Activated CD4-positive, alpha-beta memory T cell treated with anti-CD3 and anti-CD28 coated beads, Interleukin-2, amount 10 ng/mL, durations not matched to agents 7 days and 5 days (primary cell): ENCODE measurements at regions of chr11 and their contacts with region 1.

Region 1: DNA sequence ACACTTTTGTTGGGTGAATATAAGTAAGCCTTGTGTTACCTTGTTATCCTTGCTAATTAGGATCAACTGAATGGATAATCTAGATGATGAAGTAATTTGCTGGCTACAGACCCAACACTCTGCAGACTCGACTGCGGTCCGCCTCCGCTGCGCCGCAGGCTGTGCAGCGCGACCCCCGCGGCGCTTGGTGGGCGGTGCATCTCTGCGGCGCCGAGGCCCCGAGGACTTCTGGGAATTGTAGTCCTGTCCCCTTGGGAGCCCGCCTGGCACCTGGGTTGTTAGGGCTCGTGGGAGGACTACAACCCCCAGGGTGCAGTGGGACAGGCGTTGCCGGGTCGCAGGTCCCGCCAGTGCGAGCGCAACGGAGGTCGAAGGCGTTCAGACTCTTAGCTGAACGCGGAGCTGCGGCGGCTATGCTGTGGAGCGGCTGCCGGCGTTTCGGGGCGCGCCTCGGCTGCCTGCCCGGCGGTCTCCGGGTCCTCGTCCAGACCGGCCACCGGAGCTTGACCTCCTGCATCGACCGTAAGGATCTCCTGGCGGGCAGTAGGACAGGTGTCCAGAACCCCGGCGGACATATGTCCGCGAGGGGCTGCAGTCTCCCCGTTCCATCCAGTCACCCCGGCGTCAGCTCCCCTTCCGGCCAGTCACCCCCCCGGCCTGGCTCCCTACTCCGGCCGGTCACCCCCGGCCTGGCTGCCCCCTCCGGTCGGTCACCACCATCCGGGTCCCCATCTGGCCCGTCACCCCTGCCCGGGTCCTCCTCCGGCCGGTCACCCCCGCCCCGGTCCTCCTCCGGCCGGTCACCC is at the starts of genes ACAD8 and THYN1:
- DNase-seq: peak; percentile 97
- H3K4me3 Mint-ChIP-seq: peak within 1 kb of the TSS; percentile 88
- H3K27ac Mint-ChIP-seq: peak within 1 kb of the TSS; percentile 64
- H3K4me1 Mint-ChIP-seq: peaks cover 44% of the 10 kb centered on the region
- H3K27me3 Mint-ChIP-seq: no peaks in the 10 kb centered on the region
- total RNA-seq, gene ACAD8: 21.8 to 23.3 TPM
- total RNA-seq, gene THYN1: 61.5 to 67.0 TPM

Region 2: GRCh38 chr11:134270250-134270714 is 16.9 kb after region 1 on chr11:
- CTCF ChIA-PET with region 1: interaction called, 16 read pairs
- POLR2A ChIA-PET with region 1: interaction called, 18 read pairs
- DNase-seq: peak; percentile 68
- H3K4me3 Mint-ChIP-seq: peak overlapping the region; percentile 39
- H3K27ac Mint-ChIP-seq: peak overlapping the region; percentile 67
- H3K4me1 Mint-ChIP-seq: peaks cover 75% of the 10 kb centered on the region
- H3K27me3 Mint-ChIP-seq: no peaks in the 10 kb centered on the region

Region 3: GRCh38 chr11:134466156-134466555 is 212.8 kb after region 1 on chr11:
- CTCF ChIA-PET with region 1: no interaction called
- POLR2A ChIA-PET with region 1: no interaction called
- DNase-seq: no peak
- H3K4me3 Mint-ChIP-seq: no peak overlapping the region
- H3K27ac Mint-ChIP-seq: no peak overlapping the region
- H3K4me1 Mint-ChIP-seq: no peaks in the 10 kb centered on the region
- H3K27me3 Mint-ChIP-seq: peaks cover 24% of the 10 kb centered on the region

Region 4: DNA sequence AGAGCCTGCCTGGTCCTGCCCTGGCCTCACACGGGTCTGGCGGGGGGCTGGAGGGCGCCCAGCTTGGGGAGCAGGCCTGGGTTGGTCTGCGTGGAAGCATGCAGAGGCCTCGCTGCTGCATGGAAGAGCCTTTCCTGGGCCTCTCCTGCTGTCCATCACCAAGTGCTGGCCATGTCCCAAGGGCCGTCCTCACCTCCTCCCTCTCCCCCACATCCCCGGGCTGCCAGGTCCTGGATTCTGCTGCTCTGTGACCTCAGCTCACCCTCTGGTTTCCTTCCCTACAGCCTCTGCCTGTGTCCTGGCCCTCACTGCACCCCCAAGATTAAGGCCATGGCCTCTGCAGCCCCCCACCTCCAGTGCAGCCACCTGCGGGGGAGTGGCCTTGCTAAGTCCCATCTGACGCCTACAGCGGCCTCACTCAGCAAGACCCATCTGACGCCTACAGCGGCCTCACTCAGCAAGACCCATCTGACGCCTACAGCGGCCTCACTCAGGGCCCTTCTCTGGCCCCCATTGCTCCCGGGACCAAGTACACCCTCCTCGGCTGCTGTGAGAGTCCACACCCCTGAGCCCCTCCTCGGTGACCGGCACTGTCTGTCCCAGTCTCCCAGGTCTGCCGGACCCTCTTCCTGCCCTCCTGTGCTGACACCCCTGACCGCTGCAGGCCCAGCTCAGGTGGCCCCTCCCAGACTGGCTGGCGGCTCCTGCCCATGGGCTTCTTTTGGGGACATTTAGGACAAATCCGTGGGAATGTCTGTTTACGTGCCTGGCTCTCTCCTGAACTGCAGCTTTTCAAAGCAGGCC is 278.1 kb after region 1 on chr11:
- CTCF ChIA-PET with region 1: no interaction called
- POLR2A ChIA-PET with region 1: no interaction called
- DNase-seq: peak; percentile 9
- H3K4me3 Mint-ChIP-seq: no peak overlapping the region
- H3K27ac Mint-ChIP-seq: no peak overlapping the region
- H3K4me1 Mint-ChIP-seq: no peaks in the 10 kb centered on the region
- H3K27me3 Mint-ChIP-seq: peaks cover 17% of the 10 kb centered on the region